Colonic mucosa (tissue), 4 donors: ENCODE measurements at regions of chrX and their contacts with region 1.

Region 1: DNA sequence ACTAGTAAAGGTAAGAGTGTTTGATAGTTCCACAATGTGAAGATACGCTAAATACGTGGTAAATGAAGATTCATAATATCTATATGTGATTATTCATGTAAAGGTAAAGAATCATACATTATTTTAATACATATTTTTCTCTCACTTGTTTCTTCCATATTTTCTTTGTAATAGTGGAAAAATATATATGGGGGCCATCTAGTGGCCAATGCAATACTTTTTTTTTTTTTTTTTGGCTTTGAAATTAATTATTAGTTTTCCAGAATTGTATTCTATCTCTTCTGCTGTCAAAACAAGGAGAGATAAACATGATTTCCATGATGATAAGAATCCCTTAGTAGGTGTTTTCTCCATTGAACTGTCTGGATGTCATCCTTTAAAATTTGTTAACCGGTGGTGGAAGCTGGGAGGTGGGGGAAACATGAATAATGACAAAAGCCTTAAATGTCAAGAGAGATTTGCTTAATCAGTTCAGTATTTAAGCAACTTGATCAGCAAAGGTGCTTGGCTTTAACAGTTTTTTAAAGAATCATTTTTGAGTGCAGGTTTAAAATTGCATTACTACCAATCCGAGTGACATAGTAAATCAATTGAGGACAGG is 508.7 kb upstream of the HTR2C start:
- DNase-seq: no peak
- H3K4me3 ChIP-seq: no peak overlapping the region
- H3K27ac ChIP-seq: no peak overlapping the region
- H3K4me1 ChIP-seq: no peaks in the 10 kb centered on the region
- H3K27me3 ChIP-seq: no peaks in the 10 kb centered on the region
- CTCF ChIP-seq: no peak

Region 2: GRCh38 chrX:113947548-113947947 is 127.6 kb before region 1 on chrX:
- intact Hi-C with region 1: loop called (anchors 10 kb)
- DNase-seq: no peak
- H3K4me3 ChIP-seq: no peak overlapping the region
- H3K27ac ChIP-seq: no peak overlapping the region
- H3K4me1 ChIP-seq: no peaks in the 10 kb centered on the region
- H3K27me3 ChIP-seq: no peaks in the 10 kb centered on the region
- CTCF ChIP-seq: no peak

Region 3: DNA sequence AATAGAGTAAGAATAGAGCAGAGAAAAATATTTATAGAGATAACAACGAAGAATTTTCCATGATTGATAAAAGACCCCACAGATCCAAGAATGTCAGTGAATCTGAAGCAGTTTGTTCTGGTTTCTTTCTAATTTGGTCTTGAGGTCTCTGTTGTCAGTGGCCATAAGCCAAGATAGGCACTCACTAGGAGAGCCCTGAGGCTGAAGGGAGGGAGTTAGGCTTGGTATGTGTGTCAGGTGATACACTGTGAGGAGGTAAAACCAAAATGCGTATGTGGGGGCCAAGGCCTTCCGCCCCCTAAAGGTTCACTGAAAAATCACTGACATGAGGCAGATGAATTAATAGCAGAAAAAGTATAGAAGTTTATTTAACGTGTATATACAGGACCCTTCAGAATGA is 126.4 kb after region 1 on chrX:
- intact Hi-C with region 1: no loop called
- DNase-seq: no peak
- H3K4me3 ChIP-seq: no peak overlapping the region
- H3K27ac ChIP-seq: no peak overlapping the region
- H3K4me1 ChIP-seq: no peaks in the 10 kb centered on the region
- H3K27me3 ChIP-seq: no peaks in the 10 kb centered on the region
- CTCF ChIP-seq: no peak